Activated naive CD4-positive, alpha-beta T cell treated with anti-CD3 and anti-CD28 coated beads for 36 hours (primary cell): ENCODE measurements at regions of chr9 and their contacts with region 1.

Region 1: DNA sequence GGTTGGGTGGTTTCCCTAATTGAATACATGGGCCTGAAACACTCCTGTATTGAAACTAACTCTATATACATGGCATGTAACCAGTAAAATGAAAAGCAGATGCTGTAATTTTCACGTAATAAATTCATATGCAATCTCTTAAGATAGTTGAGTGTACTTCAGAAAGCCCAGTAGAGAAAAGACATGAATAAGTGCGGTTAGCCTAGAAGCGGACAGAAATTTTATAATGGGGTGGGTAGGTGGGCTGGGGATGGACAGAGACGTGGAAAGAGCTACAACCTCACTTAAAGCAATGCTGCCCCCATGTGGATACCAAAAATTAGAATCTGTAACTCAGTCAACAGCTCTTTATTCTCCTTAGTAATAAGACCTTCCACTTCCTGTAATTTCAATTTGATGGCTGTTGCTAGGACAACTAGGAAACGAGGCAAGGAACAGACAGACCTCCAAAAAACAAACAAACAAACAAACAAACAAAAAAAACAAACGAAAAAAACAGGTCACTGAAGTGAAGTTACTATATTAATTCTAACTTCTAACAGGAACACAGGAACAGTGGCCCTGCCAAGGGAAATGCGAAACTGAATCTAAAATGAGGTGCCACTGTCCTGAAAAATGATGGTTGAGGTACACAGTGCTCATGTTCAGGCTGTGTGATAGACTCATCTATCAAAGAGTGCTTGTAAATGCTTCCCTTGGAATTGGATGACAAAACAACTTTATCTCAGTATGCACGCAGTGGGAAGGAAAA is 103.4 kb upstream of the GNA14 start:
- DNase-seq: peak; percentile 26
- H3K4me3 Mint-ChIP-seq: no peak overlapping the region
- H3K27ac Mint-ChIP-seq: no peak overlapping the region
- H3K4me1 Mint-ChIP-seq: peaks cover 34% of the 10 kb centered on the region
- H3K27me3 Mint-ChIP-seq: no peaks in the 10 kb centered on the region

Region 2: DNA sequence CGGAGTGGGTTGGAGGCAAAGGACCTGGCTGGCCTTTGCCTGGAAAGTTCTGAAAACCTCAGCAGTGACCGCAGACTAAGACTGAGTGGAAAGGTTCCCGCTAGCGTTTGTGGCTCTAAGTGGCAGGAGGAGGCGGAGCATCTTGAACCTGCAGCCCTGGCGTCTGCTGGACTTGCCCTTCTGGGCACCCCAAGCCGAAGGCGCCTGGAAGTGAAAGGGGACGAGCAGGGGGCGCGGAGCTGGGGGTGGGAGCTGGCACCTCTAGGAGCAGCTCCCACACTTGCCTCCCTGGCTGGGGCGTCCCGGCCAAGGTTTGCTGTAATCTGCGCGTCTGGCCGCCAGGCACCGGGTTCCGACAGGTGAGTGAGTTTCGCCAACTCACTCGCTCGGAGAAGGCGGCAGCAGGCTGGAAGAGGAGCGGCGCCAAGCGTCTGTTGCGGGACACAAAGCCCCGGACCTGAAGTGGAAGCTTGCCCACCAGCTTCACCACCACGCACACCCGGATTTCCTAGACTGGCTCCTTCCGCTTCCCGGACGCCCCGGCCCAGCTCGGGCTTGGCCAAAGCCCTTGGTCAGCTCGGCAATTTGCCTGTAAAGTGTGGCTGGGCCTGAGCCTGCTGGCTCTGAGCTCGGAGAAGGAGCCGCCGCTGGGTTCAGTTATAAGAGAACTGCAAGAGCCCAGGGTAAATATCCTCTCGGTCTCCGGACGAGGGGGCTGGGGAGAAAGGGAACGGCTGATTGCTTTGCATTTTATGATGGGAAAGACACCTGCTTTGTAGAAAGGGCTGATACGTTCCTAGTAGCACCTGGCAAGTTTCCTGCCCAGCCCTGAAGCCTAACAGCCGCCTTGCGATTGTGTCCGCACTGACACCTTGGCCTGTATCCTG is 103.0 kb before region 1 on chr9 and contains the start of gene GNA14:
- CTCF ChIA-PET with region 1: interaction called, 4 read pairs
- intact Hi-C with region 1: loop called (anchors 2 kb)
- DNase-seq: peak; percentile 34
- H3K4me3 Mint-ChIP-seq: peak within 1 kb of the TSS; percentile 66
- H3K27ac Mint-ChIP-seq: no peak within 1 kb of the TSS
- H3K4me1 Mint-ChIP-seq: peaks cover 10% of the 10 kb centered on the region
- H3K27me3 Mint-ChIP-seq: peaks cover 43% of the 10 kb centered on the region
- total RNA-seq, gene GNA14: not detected

Region 3: GRCh38 chr9:77663754-77664153 is 87.8 kb before region 1 on chr9:
- CTCF ChIA-PET with region 1: no interaction called
- intact Hi-C with region 1: loop called (anchors 1 kb)
- DNase-seq: no peak
- H3K4me3 Mint-ChIP-seq: no peak overlapping the region
- H3K27ac Mint-ChIP-seq: no peak overlapping the region
- H3K4me1 Mint-ChIP-seq: no peaks in the 10 kb centered on the region
- H3K27me3 Mint-ChIP-seq: peaks cover 6% of the 10 kb centered on the region